Common myeloid progenitor, CD34-positive (primary cell): ENCODE measurements at regions of chr19 and their contacts with region 1.

Region 1: GRCh38 chr19:3586124-3586626 is 897 bp downstream of the GIPC3 start:
- DNase-seq: peak in 2 of 3 donors; percentile 56 to 63
- H3K4me3 ChIP-seq: peak overlapping the region; percentile 44 to 74 (median 67)
- H3K27ac ChIP-seq: no peak overlapping the region
- H3K4me1 ChIP-seq: peaks cover 0 to 9% (median 8%) of the 10 kb centered on the region in 4 experiments
- H3K27me3 ChIP-seq: no peaks in the 10 kb centered on the region

Region 2: GRCh38 chr19:3450796-3451411 is 135.3 kb before region 1 on chr19:
- CTCF ChIA-PET with region 1: no interaction called
- POLR2A ChIA-PET with region 1: no interaction called
- DNase-seq: peak in 1 of 3 donors; percentile 18
- H3K4me3 ChIP-seq: no peak overlapping the region
- H3K27ac ChIP-seq: no peak overlapping the region
- H3K4me1 ChIP-seq: no peaks in the 10 kb centered on the region
- H3K27me3 ChIP-seq: no peaks in the 10 kb centered on the region

Region 3: DNA sequence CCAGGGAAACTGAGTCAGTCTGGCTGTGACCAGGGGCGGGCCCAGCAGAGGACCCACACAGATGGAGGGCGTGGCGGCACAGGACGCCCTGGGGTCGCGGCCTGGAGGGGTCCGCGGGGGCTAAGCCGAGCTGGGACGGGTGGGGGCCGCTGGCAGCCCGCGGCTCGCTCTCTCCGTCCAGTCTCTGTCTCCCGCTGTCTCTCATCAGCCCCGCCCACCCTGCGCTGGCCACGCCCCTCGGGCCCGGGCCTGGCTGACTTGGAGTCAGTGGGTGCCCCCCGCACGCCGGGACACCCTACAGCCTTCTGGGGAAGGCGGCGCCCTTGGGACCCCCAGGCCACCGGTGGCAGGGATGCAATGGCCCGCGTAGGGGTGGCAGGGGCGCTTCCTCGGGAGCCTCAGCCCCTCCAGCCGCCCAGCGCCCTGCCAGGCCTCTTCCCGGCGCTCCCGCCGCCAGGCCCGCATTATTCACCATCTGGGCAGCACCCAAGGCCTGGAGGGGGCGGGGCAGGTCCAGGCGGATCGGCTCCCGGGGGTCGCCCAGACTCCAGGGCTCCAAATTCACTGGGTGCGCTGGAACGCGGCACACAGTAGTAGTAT is 20.6 kb after region 1 on chr19 and contains the start of gene TBXA2R:
- CTCF ChIA-PET with region 1: interaction called, 15 read pairs
- POLR2A ChIA-PET with region 1: interaction called, 3 read pairs
- DNase-seq: peak in 2 of 3 donors; percentile 45 to 53
- H3K4me3 ChIP-seq: peak within 1 kb of the TSS; percentile 37 to 81 (median 72)
- H3K27ac ChIP-seq: peak within 1 kb of the TSS in 1 of 2 experiments; percentile 56
- H3K4me1 ChIP-seq: peaks cover 11 to 65% (median 63%) of the 10 kb centered on the region in 4 experiments
- H3K27me3 ChIP-seq: no peaks in the 10 kb centered on the region

Region 4: GRCh38 chr19:3618144-3618810 is 32.1 kb after region 1 on chr19:
- CTCF ChIA-PET with region 1: interaction called, 91 read pairs
- POLR2A ChIA-PET with region 1: no interaction called
- DNase-seq: peak in 2 of 3 donors; percentile 35 to 51
- H3K4me3 ChIP-seq: peak overlapping the region in 4 of 7 experiments; percentile 13 to 71 (median 61)
- H3K27ac ChIP-seq: no peak overlapping the region
- H3K4me1 ChIP-seq: peaks cover 0 to 21% (median 21%) of the 10 kb centered on the region in 4 experiments
- H3K27me3 ChIP-seq: no peaks in the 10 kb centered on the region

Region 5: DNA sequence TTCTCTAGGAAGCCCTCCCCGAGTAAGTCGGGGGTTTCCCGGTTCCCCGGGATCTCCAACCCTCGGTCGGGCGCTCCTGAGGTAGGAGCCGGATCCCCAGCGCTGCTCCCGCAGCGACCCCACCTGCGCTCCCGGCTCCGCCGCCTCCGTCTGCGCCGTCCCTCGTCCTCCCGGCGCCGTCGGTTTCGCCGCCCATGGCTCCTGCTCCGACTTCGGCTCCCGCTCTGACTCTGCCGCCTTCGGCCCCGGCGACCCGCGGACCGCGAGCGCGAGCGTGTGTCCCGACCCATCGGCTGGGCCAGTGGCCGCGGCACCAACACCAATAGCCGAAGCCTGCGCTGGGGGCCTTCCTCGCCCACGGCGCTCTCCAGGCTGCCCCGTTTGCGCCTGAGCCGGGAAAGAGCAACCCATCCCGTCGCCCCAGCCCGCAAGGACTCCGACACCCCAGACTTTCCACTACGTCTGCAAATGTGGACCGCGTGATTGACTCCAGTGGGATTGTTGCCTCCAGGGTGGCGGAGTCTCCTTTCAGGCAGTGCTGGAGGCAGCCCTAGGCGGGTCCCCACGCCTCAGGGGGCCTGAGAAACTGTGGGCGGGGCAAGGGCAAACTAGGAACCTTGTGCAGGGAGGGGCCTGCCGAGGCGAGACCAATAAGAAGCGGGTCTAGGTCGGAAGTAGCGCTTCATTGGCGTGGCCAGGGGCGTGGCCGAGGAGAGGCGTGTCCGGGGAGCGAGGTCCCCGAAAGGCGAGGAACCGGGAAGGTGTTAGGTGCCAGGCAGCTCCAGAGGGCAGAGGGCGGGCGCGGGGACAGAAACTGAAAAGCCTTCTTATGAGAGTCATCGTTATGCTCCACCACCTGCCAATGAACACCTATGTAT is 40.5 kb after region 1 on chr19 and contains the start of gene CACTIN:
- CTCF ChIA-PET with region 1: interaction called, 91 read pairs
- POLR2A ChIA-PET with region 1: no interaction called
- DNase-seq: peak; percentile 98 to 99 (median 99)
- H3K4me3 ChIP-seq: peak within 1 kb of the TSS; percentile 82 to 100 (median 94)
- H3K27ac ChIP-seq: peak within 1 kb of the TSS; percentile 87 to 92
- H3K4me1 ChIP-seq: peaks cover 5 to 23% (median 20%) of the 10 kb centered on the region in 4 experiments
- H3K27me3 ChIP-seq: no peaks in the 10 kb centered on the region

Region 6: DNA sequence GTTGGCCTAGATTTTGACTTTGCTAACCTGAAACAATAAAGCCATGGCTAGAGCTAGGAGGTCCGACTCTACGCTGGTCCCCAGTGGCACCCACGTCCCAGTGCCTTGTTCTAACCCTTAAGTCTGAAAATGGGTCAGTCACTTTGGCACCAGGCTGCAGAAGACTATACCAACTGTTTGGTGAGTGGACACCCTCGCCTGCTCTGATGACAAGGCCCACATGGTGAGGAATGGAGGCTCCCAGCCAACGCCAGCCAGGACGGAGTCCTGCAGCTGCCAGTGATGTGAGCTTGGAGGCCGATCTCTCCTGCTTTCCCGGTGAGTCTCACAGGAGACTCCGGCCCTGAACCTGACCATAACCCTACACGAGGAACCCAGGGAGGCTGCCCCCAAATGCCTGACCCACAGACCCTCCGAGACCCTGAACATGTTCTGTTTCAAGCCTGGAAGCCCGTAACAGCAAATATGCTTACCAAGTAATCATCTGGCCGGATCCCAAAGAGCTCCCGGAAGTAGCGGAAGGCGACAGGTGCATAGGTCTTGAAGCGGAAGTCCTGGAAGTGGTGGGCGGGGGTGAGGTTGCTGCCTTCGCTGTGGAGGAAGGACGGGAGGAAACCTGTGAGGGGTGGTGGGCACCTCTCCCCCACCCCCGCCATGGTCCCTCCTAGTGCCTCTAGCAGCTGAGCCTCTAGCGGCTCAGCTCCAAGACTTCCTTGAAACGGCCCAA is 74.5 kb after region 1 on chr19:
- CTCF ChIA-PET with region 1: no interaction called
- POLR2A ChIA-PET with region 1: no interaction called
- DNase-seq: no peak
- H3K4me3 ChIP-seq: no peak overlapping the region
- H3K27ac ChIP-seq: no peak overlapping the region
- H3K4me1 ChIP-seq: no peaks in the 10 kb centered on the region
- H3K27me3 ChIP-seq: no peaks in the 10 kb centered on the region